CD8-positive, alpha-beta T cell (primary cell): ENCODE measurements at regions of chr2 and their contacts with region 1.

Region 1: GRCh38 chr2:85595301-85596025 is at the start of gene RNF181:
- DNase-seq: peak; percentile 72 to 97 (median 89)
- ATAC-seq: peak; percentile 98
- H3K4me3 ChIP-seq: peak within 1 kb of the TSS; percentile 75 to 78
- H3K4me3 Mint-ChIP-seq: peak within 1 kb of the TSS; percentile 97
- H3K27ac ChIP-seq: peak within 1 kb of the TSS; percentile 73 to 77
- H3K27ac Mint-ChIP-seq: peak within 1 kb of the TSS; percentile 97
- H3K4me1 ChIP-seq: peaks cover 25% of the 10 kb centered on the region
- H3K4me1 Mint-ChIP-seq: peaks cover 35% of the 10 kb centered on the region
- H3K27me3 ChIP-seq: no peaks in the 10 kb centered on the region
- H3K27me3 Mint-ChIP-seq: no peaks in the 10 kb centered on the region
- CTCF ChIP-seq: no peak
- total RNA-seq, gene RNF181: 38.1 to 41.0 TPM

Region 2: GRCh38 chr2:85577386-85578242 is 17.8 kb before region 1 on chr2 and contains the start of gene VAMP8:
- CTCF ChIA-PET with region 1: interaction called, 3 read pairs
- POLR2A ChIA-PET with region 1: interaction called, 19 read pairs
- intact Hi-C with region 1: loop called (anchors 1 to 2 kb)
- DNase-seq: peak; percentile 28 to 78 (median 64)
- ATAC-seq: peak; percentile 79
- H3K4me3 ChIP-seq: peak within 1 kb of the TSS; percentile 76 to 85
- H3K4me3 Mint-ChIP-seq: peak within 1 kb of the TSS; percentile 93
- H3K27ac ChIP-seq: peak within 1 kb of the TSS; percentile 64 to 78
- H3K27ac Mint-ChIP-seq: peak within 1 kb of the TSS; percentile 92
- H3K4me1 ChIP-seq: peaks cover 18% of the 10 kb centered on the region
- H3K4me1 Mint-ChIP-seq: peaks cover 43% of the 10 kb centered on the region
- H3K27me3 ChIP-seq: no peaks in the 10 kb centered on the region
- H3K27me3 Mint-ChIP-seq: no peaks in the 10 kb centered on the region
- CTCF ChIP-seq: no peak
- total RNA-seq, gene VAMP8: 28.1 to 28.7 TPM

Region 3: GRCh38 chr2:85584857-85585783 is 10.3 kb before region 1 on chr2:
- CTCF ChIA-PET with region 1: interaction called, 6 read pairs
- POLR2A ChIA-PET with region 1: interaction called, 20 read pairs
- intact Hi-C with region 1: loop called in 1 of 2 experiments (anchors 1 kb)
- DNase-seq: peak in 4 of 9 experiments; percentile 19 to 60 (median 40)
- ATAC-seq: peak; percentile 45
- H3K4me3 ChIP-seq: peak overlapping the region; percentile 67 to 78
- H3K4me3 Mint-ChIP-seq: peak overlapping the region; percentile 90
- H3K27ac ChIP-seq: peak overlapping the region; percentile 54 to 76
- H3K27ac Mint-ChIP-seq: peak overlapping the region; percentile 94
- H3K4me1 ChIP-seq: peaks cover 33% of the 10 kb centered on the region
- H3K4me1 Mint-ChIP-seq: peaks cover 57% of the 10 kb centered on the region
- H3K27me3 ChIP-seq: no peaks in the 10 kb centered on the region
- H3K27me3 Mint-ChIP-seq: no peaks in the 10 kb centered on the region
- CTCF ChIP-seq: no peak

Region 4: GRCh38 chr2:85611705-85612587 is 16.5 kb after region 1 on chr2 and contains the start of gene C2orf68:
- CTCF ChIA-PET with region 1: interaction called, 3 read pairs
- POLR2A ChIA-PET with region 1: interaction called, 5 read pairs
- intact Hi-C with region 1: loop called (anchors 2 kb)
- DNase-seq: peak; percentile 49 to 90 (median 83)
- ATAC-seq: peak; percentile 55
- H3K4me3 ChIP-seq: peak within 1 kb of the TSS; percentile 53 to 55
- H3K4me3 Mint-ChIP-seq: peak within 1 kb of the TSS; percentile 97
- H3K27ac ChIP-seq: peak within 1 kb of the TSS; percentile 61 to 70
- H3K27ac Mint-ChIP-seq: peak within 1 kb of the TSS; percentile 95
- H3K4me1 ChIP-seq: peaks cover 26% of the 10 kb centered on the region
- H3K4me1 Mint-ChIP-seq: peaks cover 39% of the 10 kb centered on the region
- H3K27me3 ChIP-seq: no peaks in the 10 kb centered on the region
- H3K27me3 Mint-ChIP-seq: no peaks in the 10 kb centered on the region
- CTCF ChIP-seq: no peak
- total RNA-seq, gene C2orf68: 23.2 to 27.9 TPM

Region 5: GRCh38 chr2:86123328-86123925 is 528.0 kb after region 1 on chr2:
- CTCF ChIA-PET with region 1: no interaction called
- POLR2A ChIA-PET with region 1: no interaction called
- intact Hi-C with region 1: no loop called
- DNase-seq: no peak
- ATAC-seq: no peak
- H3K4me3 ChIP-seq: no peak overlapping the region
- H3K4me3 Mint-ChIP-seq: no peak overlapping the region
- H3K27ac ChIP-seq: no peak overlapping the region
- H3K27ac Mint-ChIP-seq: no peak overlapping the region
- H3K4me1 ChIP-seq: no peaks in the 10 kb centered on the region
- H3K4me1 Mint-ChIP-seq: no peaks in the 10 kb centered on the region
- H3K27me3 ChIP-seq: no peaks in the 10 kb centered on the region
- H3K27me3 Mint-ChIP-seq: no peaks in the 10 kb centered on the region
- CTCF ChIP-seq: no peak